Caco-2 (cell line): ENCODE measurements at regions of chr3 and their contacts with region 1.

Region 1: DNA sequence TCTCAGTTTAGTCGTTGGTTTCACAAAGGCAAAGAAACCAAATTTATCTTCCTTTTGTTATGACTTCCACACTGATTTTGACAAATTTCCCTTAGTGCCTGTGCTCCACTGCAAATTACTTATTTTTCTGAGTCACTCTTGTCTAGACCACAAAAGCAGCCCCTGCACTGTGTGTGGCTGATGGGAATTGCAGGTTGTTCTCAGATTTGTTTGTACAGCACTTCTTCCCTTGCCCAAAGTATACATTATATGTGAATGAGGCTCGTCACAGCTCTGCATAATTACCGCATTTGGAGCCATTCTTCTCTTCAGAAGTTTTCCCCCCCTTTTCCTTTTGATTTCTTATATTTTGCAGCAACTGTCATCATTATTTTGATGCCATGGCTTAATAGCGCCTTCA is 354.2 kb upstream of the IL12A start:
- DNase-seq: no peak
- H3K4me3 ChIP-seq: no peak overlapping the region
- H3K4me3 Mint-ChIP-seq: peak overlapping the region; percentile 37
- H3K27ac Mint-ChIP-seq: peak overlapping the region; percentile 65
- H3K4me1 ChIP-seq: peaks cover 54% of the 10 kb centered on the region
- H3K4me1 Mint-ChIP-seq: peaks cover 44% of the 10 kb centered on the region
- H3K27me3 ChIP-seq: no peaks in the 10 kb centered on the region
- H3K27me3 Mint-ChIP-seq: no peaks in the 10 kb centered on the region
- CTCF ChIP-seq: no peak

Region 2: DNA sequence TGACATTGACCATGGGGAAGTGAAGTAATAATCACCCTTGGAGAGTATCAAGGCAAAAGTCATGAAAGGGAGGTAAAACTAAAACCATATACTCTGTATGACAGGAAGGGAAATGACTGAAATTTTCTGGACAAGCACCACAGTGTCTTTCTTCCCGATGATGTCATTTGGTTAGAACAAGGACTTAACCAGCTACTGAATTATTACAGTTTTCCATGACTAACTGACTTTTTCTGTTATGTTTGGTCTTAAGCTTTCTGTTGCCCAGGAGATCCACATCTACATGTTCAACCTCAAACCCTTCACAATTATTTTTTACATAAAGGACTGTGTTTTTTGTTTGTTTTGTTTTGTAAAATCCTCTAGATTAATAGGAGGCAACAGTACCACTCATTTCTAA is 162.3 kb after region 1 on chr3:
- CTCF ChIA-PET with region 1: no interaction called
- POLR2A ChIA-PET with region 1: no interaction called
- intact Hi-C with region 1: loop called (anchors 5 kb)
- DNase-seq: no peak
- H3K4me3 ChIP-seq: no peak overlapping the region
- H3K4me3 Mint-ChIP-seq: no peak overlapping the region
- H3K27ac Mint-ChIP-seq: no peak overlapping the region
- H3K4me1 ChIP-seq: peaks cover 61% of the 10 kb centered on the region
- H3K4me1 Mint-ChIP-seq: peaks cover 31% of the 10 kb centered on the region
- H3K27me3 ChIP-seq: no peaks in the 10 kb centered on the region
- H3K27me3 Mint-ChIP-seq: no peaks in the 10 kb centered on the region
- CTCF ChIP-seq: no peak

Region 3: DNA sequence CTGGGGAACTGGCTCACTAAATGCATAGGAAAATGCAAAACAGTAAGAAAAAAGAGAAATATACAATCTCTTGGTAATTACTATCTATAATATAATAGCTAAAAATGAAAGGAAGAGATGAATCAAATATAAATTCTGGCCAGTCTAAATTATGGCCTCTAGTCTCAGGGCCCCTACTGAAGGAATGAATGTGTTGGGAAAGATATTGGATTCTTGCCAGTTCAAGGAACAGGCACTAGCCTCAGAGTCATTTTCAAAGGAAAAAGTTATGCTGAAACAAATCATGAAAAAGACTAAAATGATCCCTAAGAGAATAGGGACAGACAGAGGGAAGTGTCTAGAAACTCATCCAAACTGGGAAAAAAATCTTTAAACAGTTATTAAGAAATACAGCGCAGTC is 653.2 kb after region 1 on chr3:
- CTCF ChIA-PET with region 1: no interaction called
- POLR2A ChIA-PET with region 1: no interaction called
- intact Hi-C with region 1: no loop called
- DNase-seq: no peak
- H3K4me3 ChIP-seq: no peak overlapping the region
- H3K4me3 Mint-ChIP-seq: no peak overlapping the region
- H3K27ac Mint-ChIP-seq: no peak overlapping the region
- H3K4me1 ChIP-seq: no peaks in the 10 kb centered on the region; the same call in 1 of the 2 replicates
- H3K4me1 Mint-ChIP-seq: peaks cover 6% of the 10 kb centered on the region
- H3K27me3 ChIP-seq: no peaks in the 10 kb centered on the region
- H3K27me3 Mint-ChIP-seq: no peaks in the 10 kb centered on the region
- CTCF ChIP-seq: no peak